Sigmoid colon (tissue), 7 donors: ENCODE measurements at regions of chr1 and their contacts with region 1.

Region 1: GRCh38 chr1:54488779-54489626 is 59.0 kb upstream of the ACOT11 start:
- DNase-seq: peak; percentile 90
- H3K4me3 ChIP-seq: peak overlapping the region; percentile 55 to 59 (median 58)
- H3K27ac ChIP-seq: peak overlapping the region; percentile 91 to 97 (median 97)
- H3K4me1 ChIP-seq: peaks cover 0 to 53% (median 49%) of the 10 kb centered on the region in 4 donors
- H3K27me3 ChIP-seq: no peaks in the 10 kb centered on the region
- CTCF ChIP-seq: peak; percentile 92 to 96 (median 94)
- EP300 ChIP-seq: no peak
- POLR2A ChIP-seq: peak in 1 of 2 donors; percentile 1

Region 2: DNA sequence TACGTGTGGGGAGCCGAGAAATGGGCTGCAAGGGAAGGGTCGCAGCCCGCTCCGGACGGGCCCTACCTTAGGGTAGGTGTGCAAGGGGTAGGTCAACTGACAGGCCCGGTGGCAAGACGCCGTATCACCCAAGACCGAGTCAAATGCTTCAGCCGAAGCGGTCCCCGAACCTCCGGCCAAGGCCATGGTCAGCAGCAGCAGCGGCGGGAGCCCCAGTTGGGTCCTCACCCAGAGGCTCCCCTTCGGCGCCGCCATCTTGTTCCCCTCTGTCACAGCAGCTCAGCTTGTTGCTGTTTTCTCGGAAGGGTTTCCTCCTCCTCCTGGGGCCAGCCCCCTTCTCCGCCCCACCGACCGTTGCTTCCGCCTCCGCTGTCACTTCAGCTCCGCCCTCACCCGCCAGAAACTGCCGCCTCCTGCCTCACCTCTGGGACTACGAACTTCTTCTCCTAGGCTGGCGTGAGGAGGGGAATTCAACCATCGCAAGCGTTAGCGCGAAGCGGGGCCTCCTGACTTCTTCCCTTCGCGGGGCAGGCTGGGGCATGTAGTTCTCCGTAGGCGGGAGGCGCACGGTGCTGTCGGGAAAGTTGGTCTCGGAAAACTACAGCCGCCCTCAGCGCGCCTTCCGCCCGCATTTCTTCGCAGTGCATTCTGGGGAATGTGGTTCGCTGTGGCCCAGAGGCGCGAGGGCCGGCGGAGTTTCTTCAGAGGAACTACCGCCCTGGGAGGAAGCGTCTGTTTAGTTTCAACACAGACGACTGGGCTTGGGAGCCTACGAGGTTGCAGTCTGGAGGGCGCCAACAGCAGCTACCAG is 435.9 kb before region 1 on chr1 and contains the starts of genes TCEANC2 and TMEM59:
- intact Hi-C with region 1: loop called (anchors 1 kb)
- DNase-seq: peak; percentile 99
- H3K4me3 ChIP-seq: peak within 1 kb of the TSS; percentile 87 to 93 (median 90)
- H3K27ac ChIP-seq: peak within 1 kb of the TSS; percentile 96 to 98 (median 97)
- H3K4me1 ChIP-seq: peaks cover 0 to 53% (median 45%) of the 10 kb centered on the region in 4 donors
- H3K27me3 ChIP-seq: no peaks in the 10 kb centered on the region
- CTCF ChIP-seq: peak in 1 of 4 experiments; percentile 18
- EP300 ChIP-seq: no peak
- POLR2A ChIP-seq: peak; percentile 55 to 63
- total RNA-seq, gene TCEANC2: 6.1 to 6.9 (median 6.6) TPM
- total RNA-seq, gene TMEM59: 114 to 299 (median 237) TPM

Region 3: GRCh38 chr1:54070171-54070837 is 418.7 kb before region 1 on chr1:
- intact Hi-C with region 1: loop called (anchors 1 kb)
- DNase-seq: no peak
- H3K4me3 ChIP-seq: no peak overlapping the region
- H3K27ac ChIP-seq: no peak overlapping the region
- H3K4me1 ChIP-seq: no peaks in the 10 kb centered on the region
- H3K27me3 ChIP-seq: no peaks in the 10 kb centered on the region
- CTCF ChIP-seq: peak; percentile 20 to 64 (median 61)
- EP300 ChIP-seq: no peak
- POLR2A ChIP-seq: no peak

Region 4: DNA sequence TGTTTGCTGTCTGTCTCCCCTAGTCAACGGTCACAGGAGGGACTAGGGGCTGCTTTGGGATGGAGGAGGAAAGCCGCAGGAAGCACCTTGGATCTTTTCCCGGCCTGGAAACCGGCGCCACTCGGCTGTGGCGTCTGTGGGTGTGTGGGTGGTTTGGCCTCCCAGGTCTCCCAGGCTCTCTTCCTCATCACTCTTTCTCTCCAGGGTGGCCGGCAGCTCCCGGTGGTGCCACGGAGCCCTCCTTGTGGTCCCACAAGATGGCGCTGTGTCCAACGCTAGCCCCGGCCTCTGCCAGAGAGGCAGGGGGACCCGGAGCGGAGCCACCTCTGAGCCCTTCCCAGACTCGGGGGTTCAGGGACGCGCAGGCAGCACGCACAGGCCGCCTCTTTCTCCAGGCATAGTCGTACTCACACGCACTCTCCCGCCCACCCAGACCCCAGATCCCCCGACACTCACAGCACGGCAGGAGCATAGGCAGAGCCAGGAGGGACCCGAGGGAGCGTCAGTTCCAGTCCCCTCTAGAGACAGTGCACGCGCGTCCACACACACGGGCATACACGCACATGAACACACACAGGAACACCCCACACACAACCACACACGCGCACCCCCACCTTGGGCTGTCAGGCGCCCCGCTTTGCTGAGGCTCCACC is 367.4 kb before region 1 on chr1:
- intact Hi-C with region 1: loop called (anchors 1 kb)
- DNase-seq: peak; percentile 90
- H3K4me3 ChIP-seq: peak overlapping the region in 3 of 4 donors; percentile 13 to 34 (median 32)
- H3K27ac ChIP-seq: no peak overlapping the region
- H3K4me1 ChIP-seq: peaks cover 0 to 13% (median 12%) of the 10 kb centered on the region in 4 donors
- H3K27me3 ChIP-seq: no peaks in the 10 kb centered on the region
- CTCF ChIP-seq: peak; percentile 63 to 84 (median 75)
- EP300 ChIP-seq: no peak
- POLR2A ChIP-seq: no peak

Region 5: DNA sequence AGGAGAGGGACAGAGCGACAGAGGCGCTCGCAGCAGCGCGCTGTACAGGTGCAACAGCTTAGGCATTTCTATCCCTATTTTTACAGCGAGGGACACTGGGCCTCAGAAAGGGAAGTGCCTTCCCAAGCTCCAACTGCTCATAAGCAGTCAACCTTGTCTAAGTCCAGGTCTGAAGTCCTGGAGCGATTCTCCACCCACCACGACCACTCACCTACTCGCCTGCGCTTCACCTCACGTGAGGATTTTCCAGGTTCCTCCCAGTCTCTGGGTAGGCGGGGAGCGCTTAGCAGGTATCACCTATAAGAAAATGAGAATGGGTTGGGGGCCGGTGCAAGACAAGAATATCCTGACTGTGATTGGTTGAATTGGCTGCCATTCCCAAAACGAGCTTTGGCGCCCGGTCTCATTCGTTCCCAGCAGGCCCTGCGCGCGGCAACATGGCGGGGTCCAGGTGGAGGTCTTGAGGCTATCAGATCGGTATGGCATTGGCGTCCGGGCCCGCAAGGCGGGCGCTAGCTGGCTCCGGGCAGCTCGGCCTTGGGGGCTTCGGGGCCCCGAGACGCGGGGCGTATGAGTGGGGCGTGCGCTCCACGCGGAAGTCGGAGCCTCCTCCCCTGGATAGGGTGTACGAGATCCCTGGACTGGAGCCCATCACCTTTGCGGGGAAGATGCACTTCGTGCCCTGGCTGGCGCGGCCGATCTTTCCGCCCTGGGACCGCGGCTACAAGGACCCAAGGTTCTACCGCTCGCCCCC is 289.1 kb before region 1 on chr1 and contains the starts of genes CYB5RL and MRPL37:
- intact Hi-C with region 1: loop called (anchors 1 kb)
- DNase-seq: peak; percentile 96
- H3K4me3 ChIP-seq: peak within 1 kb of the TSS; percentile 63 to 96 (median 84)
- H3K27ac ChIP-seq: peak within 1 kb of the TSS; percentile 80 to 87 (median 81)
- H3K4me1 ChIP-seq: peaks cover 0 to 36% (median 23%) of the 10 kb centered on the region in 4 donors
- H3K27me3 ChIP-seq: no peaks in the 10 kb centered on the region
- CTCF ChIP-seq: no peak
- EP300 ChIP-seq: no peak
- POLR2A ChIP-seq: peak in 1 of 2 donors; percentile 32
- total RNA-seq, gene CYB5RL: 2.6 to 5.7 (median 5.2) TPM
- total RNA-seq, gene MRPL37: 40.7 to 64.2 (median 55.8) TPM

Region 6: DNA sequence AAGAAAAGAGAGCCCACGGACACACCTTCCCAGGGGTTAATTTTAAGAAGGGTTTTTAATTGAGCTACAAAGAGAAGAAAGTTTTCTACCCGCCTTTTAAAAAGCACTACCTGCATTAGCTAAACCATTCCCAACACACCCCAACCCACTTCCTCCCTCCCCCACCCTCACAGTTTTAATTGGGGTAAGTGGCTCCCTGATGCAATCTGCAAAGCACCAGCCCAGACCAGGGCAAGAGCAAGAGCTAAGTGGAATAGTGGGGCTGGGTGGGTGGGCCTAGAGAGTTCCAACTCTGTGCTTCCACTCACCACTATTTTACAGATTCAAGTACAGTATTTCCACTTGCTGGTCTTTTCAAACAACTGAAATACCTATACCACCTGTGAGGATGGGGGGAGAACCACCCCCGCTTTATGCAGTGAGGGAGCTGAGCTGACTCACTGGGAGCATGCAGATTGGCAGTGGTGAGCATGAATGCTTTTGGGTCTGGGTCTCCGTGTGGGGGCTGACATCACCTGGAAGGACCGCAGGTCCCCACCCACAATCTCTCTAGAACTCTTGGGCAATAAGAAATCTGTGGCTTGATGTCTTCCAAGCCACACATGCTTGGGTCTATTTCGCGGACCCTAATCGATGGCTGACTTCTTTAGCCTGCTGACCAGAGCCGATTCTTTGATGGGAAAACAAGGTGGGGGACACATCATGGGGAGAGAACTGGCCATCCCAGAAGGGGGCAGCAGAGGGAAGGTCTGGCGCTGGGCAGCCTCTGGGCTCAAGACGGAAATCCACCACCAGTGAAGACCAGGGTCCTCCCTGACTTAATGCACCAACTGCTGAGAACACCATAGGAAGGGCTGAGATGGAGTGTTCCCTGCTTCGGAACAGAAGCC is 178.3 kb before region 1 on chr1:
- intact Hi-C with region 1: loop called (anchors 5 kb)
- DNase-seq: no peak
- H3K4me3 ChIP-seq: no peak overlapping the region
- H3K27ac ChIP-seq: peak overlapping the region in 2 of 4 donors; percentile 5 to 58
- H3K4me1 ChIP-seq: peaks cover 0 to 70% (median 63%) of the 10 kb centered on the region in 4 donors
- H3K27me3 ChIP-seq: no peaks in the 10 kb centered on the region
- CTCF ChIP-seq: peak; percentile 21 to 59 (median 40)
- EP300 ChIP-seq: no peak
- POLR2A ChIP-seq: no peak